AG04449 (cell line): ENCODE measurements at regions of chr5 and their contacts with region 1.

Region 1: DNA sequence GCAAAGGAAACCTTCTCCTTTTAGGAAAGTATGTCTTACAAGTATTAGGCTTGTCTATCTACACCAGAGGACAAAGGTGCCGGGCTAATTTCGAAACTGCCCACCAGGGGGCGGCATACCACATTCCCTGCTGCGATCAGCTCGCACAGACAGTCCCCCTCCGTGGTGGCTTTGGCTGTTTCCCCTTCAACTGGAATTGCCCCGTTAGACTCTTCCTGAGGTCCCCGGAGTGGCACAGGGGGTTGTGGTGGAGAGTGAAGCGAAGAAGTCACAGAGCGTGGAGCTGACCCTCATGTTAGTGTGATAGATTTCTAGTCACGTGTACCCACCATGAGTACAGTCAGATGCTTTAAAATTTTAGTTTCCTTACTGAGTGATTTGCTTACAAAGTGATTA is 17.5 kb downstream of the PTTG1 start:
- DNase-seq: no peak
- H3K4me3 ChIP-seq: peak overlapping the region; percentile 51
- CTCF ChIP-seq: peak; percentile 85

Region 2: GRCh38 chr5:160452795-160453194 is 13.6 kb after region 1 on chr5:
- CTCF ChIA-PET with region 1: interaction called, 55 read pairs
- POLR2A ChIA-PET with region 1: no interaction called
- DNase-seq: no peak
- H3K4me3 ChIP-seq: no peak overlapping the region
- CTCF ChIP-seq: no peak

Region 3: DNA sequence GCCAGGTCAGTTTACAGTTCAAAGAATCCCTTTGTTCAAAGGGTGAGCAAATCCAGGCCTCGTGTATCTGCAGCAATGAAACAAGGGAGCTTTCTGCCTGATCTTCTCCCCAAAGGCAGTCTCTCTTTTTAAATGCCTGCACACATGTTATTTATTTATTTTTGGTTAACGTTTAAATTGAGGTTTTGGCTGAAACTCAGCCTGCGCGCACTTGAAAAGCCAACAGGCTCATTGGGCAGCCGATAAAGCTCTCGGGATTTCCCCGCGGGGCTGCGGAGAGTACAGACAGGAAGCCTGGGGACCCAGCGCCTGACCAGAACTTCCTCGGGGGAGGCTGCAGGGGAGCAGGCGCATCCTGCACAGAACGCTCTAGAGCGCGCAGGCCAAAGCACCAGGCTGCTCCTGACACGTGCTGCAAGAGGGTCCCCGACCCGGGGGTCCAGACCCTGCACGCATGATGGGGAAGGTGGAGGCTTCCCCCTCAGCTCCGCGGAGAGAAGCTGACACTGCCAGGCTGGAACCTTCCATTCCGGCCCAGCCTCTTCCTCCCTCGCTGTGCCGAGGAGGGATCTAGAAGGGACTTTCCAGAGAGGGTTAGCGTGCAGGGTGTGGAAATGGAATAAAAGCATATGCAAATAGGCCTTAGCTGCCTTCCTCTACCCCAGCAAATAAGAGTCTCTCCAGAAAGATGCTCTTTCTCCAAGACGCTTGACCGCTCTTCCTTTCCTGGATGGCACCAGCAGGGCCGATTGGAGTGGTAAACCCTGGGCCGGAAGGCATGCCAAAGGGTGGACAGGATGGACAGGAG is 28.6 kb after region 1 on chr5:
- CTCF ChIA-PET with region 1: interaction called, 52 read pairs
- POLR2A ChIA-PET with region 1: no interaction called
- DNase-seq: no peak
- H3K4me3 ChIP-seq: peak overlapping the region; percentile 13
- CTCF ChIP-seq: no peak

Region 4: DNA sequence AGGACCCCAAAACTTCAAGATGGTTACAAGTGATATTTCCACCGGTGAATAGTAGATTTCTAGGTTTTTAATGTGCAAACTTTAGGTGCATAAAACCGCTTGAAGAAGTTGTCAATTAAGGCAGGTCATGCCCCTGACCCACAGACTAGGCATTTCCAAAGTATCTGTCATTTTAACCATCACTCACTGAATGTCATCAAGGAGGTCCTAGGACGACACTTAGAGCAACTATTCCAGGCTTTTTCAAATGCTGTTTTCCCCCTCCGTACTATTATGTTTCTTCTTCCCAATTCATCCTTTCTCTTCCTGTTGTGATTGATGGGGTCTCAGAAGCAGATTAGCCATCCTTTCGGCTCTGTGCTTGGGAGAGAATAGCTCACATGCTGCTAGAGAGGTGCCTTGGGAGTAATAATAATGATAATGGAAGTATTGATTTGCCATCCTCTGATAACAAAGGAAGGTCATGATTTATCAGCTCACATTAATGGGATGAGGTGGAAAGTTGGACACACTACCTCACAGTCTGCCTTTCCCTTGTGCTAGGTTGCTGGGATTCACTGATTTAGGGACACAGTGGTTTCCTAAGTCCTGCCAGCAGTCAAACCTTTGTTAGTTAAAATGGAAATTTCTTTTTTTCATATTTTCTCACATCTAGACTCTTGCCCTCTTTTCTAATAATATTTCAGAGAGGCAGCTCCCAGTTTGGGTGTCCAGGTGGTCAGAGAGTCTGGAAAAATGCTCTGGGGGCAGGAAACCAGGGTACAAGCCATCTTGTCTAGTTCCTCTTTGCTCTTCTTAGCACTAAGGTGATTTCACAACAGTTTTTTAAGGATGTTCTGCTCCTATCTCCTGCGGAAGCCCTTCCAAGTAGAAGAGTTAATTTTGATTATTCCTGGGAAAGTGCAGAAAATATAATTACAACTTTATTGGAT is 49.5 kb after region 1 on chr5:
- CTCF ChIA-PET with region 1: interaction called, 11 read pairs
- POLR2A ChIA-PET with region 1: no interaction called
- DNase-seq: no peak
- H3K4me3 ChIP-seq: no peak overlapping the region
- CTCF ChIP-seq: no peak

Region 5: DNA sequence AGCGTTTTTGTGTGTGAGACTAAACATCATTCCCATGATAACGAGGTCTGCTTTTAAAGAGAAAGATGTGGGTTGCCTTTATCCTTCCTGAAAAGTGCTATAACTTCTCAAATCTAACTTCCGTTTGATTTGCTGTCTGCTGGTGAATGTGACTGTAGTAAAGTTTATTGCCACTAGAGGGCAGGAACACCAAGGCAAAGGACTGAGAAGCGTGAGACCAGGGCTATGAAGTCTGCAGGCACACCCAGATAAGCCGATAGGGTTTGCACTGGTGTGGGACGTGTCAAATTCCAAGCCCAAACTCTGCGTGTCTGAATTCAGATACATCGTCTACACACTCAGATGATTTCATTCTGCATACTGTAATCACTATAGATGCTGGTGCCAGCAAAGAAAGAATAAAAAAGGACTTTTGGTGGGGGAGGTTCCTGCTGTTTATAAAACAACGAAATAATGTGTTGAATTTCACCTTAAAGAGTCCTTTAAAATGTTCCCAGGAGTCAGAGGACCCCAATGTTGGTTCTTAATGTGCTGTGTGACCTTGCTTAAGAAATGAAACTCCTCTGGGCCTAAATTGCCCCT is 69.7 kb after region 1 on chr5:
- CTCF ChIA-PET with region 1: interaction called, 58 read pairs
- POLR2A ChIA-PET with region 1: no interaction called
- DNase-seq: peak; percentile 49
- H3K4me3 ChIP-seq: no peak overlapping the region
- CTCF ChIP-seq: peak; percentile 74